ENCODE measurements at regions of chr3 and their contacts with region 1.

Region 1: GRCh38 chr3:73451306-73451944 is 173.3 kb downstream of the PDZRN3 start:
- DNase-seq: no peak
- H3K4me3 Mint-ChIP-seq: no peak overlapping the region
- H3K27ac Mint-ChIP-seq: no peak overlapping the region
- H3K4me1 Mint-ChIP-seq: no peaks in the 10 kb centered on the region
- H3K27me3 Mint-ChIP-seq: no peaks in the 10 kb centered on the region

Region 2: DNA sequence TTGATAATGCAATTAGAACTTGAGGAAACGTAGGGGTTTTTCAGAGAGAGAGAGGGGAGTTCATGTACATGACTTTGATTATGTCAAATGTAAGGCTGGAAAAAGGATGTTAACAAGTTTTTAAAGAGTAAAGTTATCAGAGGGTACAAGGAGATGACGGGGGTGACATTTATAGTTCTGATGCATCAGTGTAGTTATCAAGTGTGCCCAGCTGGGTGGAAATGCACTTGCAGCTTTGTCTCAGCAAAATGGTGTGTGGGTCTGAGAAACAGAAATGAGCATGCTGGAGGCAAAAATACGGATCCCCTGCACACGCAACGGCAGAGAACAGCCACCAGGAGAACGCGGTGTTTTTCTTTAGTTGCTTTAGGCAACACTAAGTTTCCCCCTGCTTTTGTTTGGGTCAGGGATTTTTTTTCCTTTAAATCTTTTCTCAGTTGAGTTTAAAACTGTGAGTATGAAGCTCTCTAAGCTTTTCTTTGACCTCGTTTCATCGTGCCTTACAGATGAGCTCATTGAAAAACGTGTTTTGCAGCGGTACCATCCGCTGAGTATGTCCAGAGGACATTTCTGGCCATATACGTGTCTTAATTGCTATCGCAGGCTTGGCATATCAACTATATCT is 32.1 kb before region 1 on chr3:
- intact Hi-C with region 1: no loop called
- DNase-seq: no peak
- H3K4me3 Mint-ChIP-seq: no peak overlapping the region
- H3K27ac Mint-ChIP-seq: no peak overlapping the region
- H3K4me1 Mint-ChIP-seq: no peaks in the 10 kb centered on the region
- H3K27me3 Mint-ChIP-seq: no peaks in the 10 kb centered on the region

Region 3: GRCh38 chr3:73502609-73503583 is 51.5 kb after region 1 on chr3:
- intact Hi-C with region 1: loop called (anchors 1 kb)
- DNase-seq: peak; percentile 9
- H3K4me3 Mint-ChIP-seq: no peak overlapping the region
- H3K27ac Mint-ChIP-seq: no peak overlapping the region
- H3K4me1 Mint-ChIP-seq: no peaks in the 10 kb centered on the region
- H3K27me3 Mint-ChIP-seq: peaks cover 15% of the 10 kb centered on the region

Measured in activated T-helper 1 cell treated with anti-CD3 and anti-CD28 coated beads, Interleukin-12 subunit alpha, Interleukin-12 subunit beta, Interleukin-2, Interleukin-4 antibody, amounts not matched to agents 30 ng/mL and 10 ng/mL and 1 ng/mL, durations not matched to agents 14 hours and 24 hours and 36 hours (primary cell).